Activated CD4-positive, alpha-beta T cell treated with anti-CD3 and anti-CD28 coated beads for 36 hours (primary cell): ENCODE measurements at regions of chr7 and their contacts with region 1.

Region 1: DNA sequence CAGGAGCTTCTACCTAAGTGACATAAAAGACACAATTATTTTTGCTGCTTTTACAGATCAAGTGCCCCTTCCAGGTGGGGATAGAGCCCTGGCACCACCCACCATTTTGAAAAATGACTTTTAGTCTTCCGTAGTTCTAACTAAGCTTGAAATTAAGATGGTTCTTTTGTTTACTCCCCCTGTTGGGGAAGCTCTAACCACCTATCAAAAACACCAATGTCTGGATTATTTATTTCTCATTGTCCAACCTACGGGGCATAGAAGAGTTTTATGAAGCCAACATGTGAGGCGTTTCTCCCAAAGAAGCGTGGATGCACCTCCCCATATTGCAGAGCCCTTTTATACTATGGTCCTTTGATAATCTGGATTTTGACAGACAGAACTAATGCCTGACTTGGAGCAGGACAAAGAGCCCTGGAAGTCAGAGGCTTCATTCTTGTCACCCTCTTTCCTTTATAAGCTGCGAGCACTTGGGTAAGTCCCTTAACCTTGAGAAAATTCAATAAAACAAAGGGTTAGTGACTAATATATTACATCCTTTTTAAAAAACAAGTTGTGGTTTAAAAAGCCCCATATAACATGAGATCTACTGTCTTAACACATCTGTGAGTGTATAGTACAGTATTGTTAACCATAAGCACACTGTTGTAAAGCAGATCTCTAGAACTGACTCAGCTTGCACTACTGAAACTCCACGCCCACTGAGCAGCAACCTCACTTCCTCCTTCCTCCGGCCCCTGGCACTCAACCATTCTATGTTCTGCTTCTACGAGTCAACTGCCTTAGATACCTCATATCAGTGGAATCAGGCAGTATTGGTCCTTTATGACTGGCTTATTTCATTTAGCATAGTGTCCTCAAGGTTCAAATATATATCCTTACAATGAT is 67.5 kb downstream of the ATXN7L1 start:
- DNase-seq: peak; percentile 94
- ATAC-seq: peak; percentile 82
- H3K4me3 Mint-ChIP-seq: peak overlapping the region; percentile 16
- H3K27ac Mint-ChIP-seq: peak overlapping the region; percentile 71
- H3K4me1 Mint-ChIP-seq: peaks cover 59% of the 10 kb centered on the region
- H3K27me3 Mint-ChIP-seq: peaks cover 8% of the 10 kb centered on the region

Region 2: GRCh38 chr7:104299323-104299722 is 1509.6 kb before region 1 on chr7:
- CTCF ChIA-PET with region 1: no interaction called
- POLR2A ChIA-PET with region 1: no interaction called
- intact Hi-C with region 1: loop called in 1 of 2 experiments (anchors 5 kb)
- DNase-seq: no peak
- ATAC-seq: no peak
- H3K4me3 Mint-ChIP-seq: no peak overlapping the region
- H3K27ac Mint-ChIP-seq: no peak overlapping the region
- H3K4me1 Mint-ChIP-seq: peaks cover 9% of the 10 kb centered on the region
- H3K27me3 Mint-ChIP-seq: peaks cover 23% of the 10 kb centered on the region

Region 3: DNA sequence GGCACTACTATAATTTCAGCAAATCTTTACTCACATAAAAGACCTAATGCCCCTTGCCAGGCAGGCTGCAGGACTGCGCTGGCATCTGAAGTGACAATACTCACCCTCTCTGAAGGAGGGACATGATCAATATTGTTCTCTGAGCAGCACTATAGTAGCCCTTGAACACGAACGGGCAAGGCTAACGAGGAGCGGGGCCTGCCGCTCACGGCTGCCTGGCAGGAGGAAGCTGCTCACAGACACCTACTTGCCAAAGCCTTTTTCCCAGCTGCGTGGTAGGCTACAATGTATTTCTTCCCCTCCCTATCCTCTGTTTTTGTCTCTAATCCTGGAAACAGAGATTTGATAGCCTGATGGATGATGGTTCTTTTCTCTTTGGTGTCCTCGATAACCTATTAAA is 306.8 kb before region 1 on chr7:
- CTCF ChIA-PET with region 1: no interaction called
- POLR2A ChIA-PET with region 1: no interaction called
- intact Hi-C with region 1: no loop called
- DNase-seq: no peak
- ATAC-seq: no peak
- H3K4me3 Mint-ChIP-seq: no peak overlapping the region
- H3K27ac Mint-ChIP-seq: no peak overlapping the region
- H3K4me1 Mint-ChIP-seq: no peaks in the 10 kb centered on the region
- H3K27me3 Mint-ChIP-seq: no peaks in the 10 kb centered on the region

Region 4: DNA sequence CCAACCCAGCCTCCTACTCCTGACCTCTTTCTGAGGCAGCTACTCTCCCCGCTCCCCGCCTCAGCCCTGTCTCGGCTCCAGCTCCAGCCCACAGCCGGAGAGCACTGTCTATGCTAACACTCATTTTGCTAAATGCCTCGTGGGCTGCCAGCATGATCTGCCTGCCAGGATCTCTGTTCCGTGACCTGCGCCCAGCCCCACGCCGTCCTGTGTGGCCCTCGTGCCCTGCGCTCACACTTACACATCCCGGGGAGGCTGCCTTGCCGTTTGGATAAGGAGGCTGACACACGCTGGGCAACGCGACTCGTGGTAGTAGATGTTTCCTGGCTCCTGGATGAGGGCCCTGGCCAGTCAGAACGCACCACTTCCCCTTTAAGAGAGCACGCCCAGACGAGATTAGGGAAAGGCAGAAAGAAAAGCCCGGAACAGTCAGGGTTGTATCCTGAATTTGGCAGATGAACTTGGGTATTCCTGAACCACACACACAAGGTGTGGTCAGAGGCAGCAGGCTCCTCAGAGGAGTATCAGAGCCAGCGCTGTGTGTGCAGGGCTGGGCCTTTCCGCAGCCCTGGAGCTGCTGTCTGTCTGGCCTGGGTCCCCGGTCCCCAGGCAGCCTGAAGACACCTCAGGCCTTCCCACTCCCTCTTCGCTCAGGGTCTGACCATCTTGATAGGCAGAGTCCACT is 130.0 kb before region 1 on chr7:
- CTCF ChIA-PET with region 1: no interaction called
- POLR2A ChIA-PET with region 1: no interaction called
- intact Hi-C with region 1: loop called (anchors 1 to 5 kb)
- DNase-seq: peak; percentile 62
- ATAC-seq: peak; percentile 21
- H3K4me3 Mint-ChIP-seq: peak overlapping the region; percentile 83
- H3K27ac Mint-ChIP-seq: peak overlapping the region; percentile 93
- H3K4me1 Mint-ChIP-seq: peaks cover 63% of the 10 kb centered on the region
- H3K27me3 Mint-ChIP-seq: no peaks in the 10 kb centered on the region

Region 5: GRCh38 chr7:105713488-105714465 is 95.2 kb before region 1 on chr7:
- CTCF ChIA-PET with region 1: no interaction called
- POLR2A ChIA-PET with region 1: no interaction called
- intact Hi-C with region 1: no loop called
- DNase-seq: peak; percentile 19
- ATAC-seq: no peak
- H3K4me3 Mint-ChIP-seq: no peak overlapping the region
- H3K27ac Mint-ChIP-seq: no peak overlapping the region
- H3K4me1 Mint-ChIP-seq: peaks cover 12% of the 10 kb centered on the region
- H3K27me3 Mint-ChIP-seq: no peaks in the 10 kb centered on the region

Region 6: DNA sequence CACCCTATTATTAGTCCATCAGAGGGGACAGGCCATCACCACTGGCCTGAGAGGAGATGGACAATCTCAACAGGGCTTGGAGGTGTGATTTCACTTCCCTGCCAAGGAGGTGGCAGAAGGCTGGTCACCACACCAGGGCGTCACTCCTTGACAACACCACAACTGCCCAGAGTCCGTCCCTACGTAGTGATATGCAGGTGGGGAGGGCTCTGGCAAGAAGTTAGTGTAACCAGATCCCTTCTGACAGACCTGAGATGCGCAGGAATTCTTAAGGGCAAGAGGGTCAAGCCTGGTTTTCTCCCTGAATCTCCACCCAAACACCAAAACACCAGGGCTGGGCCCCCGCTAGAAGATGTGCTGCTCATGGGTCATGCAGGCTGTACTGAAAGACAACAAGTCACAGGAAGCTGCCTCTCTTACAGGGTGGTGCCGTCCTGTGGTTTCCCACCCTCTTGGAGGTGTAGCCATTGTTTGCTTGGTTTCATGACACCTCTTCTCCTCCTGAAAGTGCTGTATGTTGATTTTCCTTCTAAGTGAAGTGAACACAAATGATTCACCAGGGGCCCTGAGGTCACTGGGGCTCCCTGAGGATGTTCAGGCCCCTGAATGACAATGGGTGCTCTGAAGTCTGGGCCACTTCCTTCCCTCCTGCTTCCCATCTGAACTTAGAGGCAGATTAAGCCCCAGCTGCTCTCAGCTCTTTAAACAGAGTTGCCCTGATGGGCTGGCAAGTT is 40.3 kb after region 1 on chr7:
- CTCF ChIA-PET with region 1: interaction called, 4 read pairs
- POLR2A ChIA-PET with region 1: interaction called, 3 read pairs
- intact Hi-C with region 1: loop called (anchors 1 kb)
- DNase-seq: peak; percentile 82
- ATAC-seq: peak; percentile 96
- H3K4me3 Mint-ChIP-seq: peak overlapping the region; percentile 32
- H3K27ac Mint-ChIP-seq: peak overlapping the region; percentile 59
- H3K4me1 Mint-ChIP-seq: peaks cover 52% of the 10 kb centered on the region
- H3K27me3 Mint-ChIP-seq: no peaks in the 10 kb centered on the region

Region 7: DNA sequence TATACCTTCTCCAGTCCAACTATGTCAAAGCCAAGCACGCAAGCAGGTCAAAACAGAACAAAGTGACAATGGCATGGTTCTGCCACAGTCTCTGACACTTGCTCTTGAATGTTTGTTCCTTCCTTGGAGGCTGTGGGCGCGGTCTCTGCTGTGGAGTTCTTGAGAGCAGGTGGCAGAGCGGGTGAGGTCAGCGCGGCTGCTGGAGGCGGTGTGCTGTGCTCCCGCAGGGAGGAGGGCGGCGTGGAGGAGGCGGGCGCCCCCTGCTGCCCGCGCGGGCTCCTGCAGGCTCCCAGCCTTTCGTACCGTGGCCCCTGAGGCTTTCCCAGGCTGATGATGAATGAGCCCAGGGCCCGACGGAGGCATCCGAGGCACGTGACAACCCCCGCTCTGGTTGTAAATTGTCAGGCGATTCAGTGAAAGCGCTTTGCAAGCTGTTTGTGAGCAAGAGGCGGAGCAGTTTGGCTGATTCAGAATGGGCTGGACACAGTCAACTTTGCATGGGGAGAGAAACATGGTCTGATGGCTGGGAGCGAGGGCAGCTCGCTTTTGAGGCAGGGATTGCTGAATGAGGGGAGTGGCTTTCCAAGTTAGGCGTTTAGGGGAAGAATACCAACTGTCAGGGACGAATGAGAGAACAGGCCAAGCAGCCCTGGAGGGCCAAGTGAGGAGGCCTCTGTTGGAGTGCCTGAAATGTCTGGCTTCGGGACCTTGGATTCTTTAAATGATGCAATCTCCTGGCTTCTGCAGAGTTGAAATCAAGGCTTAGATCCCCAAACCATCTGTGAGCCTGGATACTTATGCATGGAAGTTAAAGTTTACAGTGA is 200.7 kb after region 1 on chr7:
- CTCF ChIA-PET with region 1: no interaction called
- POLR2A ChIA-PET with region 1: no interaction called
- intact Hi-C with region 1: loop called in 1 of 2 experiments (anchors 1 kb)
- DNase-seq: peak; percentile 92
- ATAC-seq: peak; percentile 99
- H3K4me3 Mint-ChIP-seq: no peak overlapping the region
- H3K27ac Mint-ChIP-seq: peak overlapping the region; percentile 4
- H3K4me1 Mint-ChIP-seq: peaks cover 21% of the 10 kb centered on the region
- H3K27me3 Mint-ChIP-seq: peaks cover 2% of the 10 kb centered on the region

Region 8: DNA sequence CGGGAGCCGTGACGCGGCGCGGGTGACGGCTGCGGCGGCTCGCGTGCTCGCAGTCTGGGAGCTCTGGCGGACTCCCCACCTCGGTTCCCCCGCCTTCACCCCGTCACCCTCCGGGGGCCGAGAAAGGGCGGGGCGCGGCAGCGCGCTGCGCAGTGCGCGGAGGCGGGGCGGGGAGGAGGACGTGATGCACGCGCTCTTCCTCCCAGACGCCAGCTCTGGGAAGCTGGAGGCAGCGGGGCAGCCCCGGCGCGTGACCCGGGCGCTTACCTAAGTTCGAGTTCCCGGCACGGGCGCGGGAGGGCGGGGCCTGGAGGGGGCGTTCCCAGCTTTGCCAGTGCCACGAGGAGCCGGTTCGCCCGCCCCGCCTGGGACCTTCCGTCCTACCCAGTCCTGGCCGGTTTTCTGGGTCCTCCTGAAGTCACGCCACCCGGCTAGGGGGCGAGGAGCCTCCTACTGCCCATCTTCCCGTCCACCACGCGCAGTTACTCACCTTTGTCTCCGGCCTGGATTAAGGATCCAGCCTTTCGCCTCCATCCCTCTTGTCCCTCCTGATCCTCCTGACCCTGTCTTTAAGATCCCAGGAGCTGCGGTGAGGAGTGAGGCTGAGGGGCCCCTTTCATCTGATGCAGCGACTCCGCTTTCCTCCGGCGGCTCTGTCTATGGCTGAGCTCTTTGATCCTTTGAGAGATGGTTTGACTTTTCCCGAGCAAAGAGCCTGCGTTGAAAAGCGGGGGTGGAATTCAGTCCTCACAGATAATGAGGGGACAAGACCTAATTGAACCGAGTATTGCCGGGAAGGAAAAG is 476.3 kb after region 1 on chr7:
- CTCF ChIA-PET with region 1: no interaction called
- POLR2A ChIA-PET with region 1: no interaction called
- intact Hi-C with region 1: loop called in 1 of 2 experiments (anchors 5 kb)
- DNase-seq: peak; percentile 100
- ATAC-seq: peak; percentile 80
- H3K4me3 Mint-ChIP-seq: peak overlapping the region; percentile 94
- H3K27ac Mint-ChIP-seq: peak overlapping the region; percentile 99
- H3K4me1 Mint-ChIP-seq: peaks cover 45% of the 10 kb centered on the region
- H3K27me3 Mint-ChIP-seq: no peaks in the 10 kb centered on the region

Region 9: GRCh38 chr7:107168233-107169119 is 1359.5 kb after region 1 on chr7 and contains the start of gene HBP1:
- CTCF ChIA-PET with region 1: no interaction called
- POLR2A ChIA-PET with region 1: no interaction called
- intact Hi-C with region 1: loop called in 1 of 2 experiments (anchors 2 kb)
- DNase-seq: peak; percentile 98
- ATAC-seq: peak; percentile 82
- H3K4me3 Mint-ChIP-seq: peak within 1 kb of the TSS; percentile 91
- H3K27ac Mint-ChIP-seq: peak within 1 kb of the TSS; percentile 100
- H3K4me1 Mint-ChIP-seq: peaks cover 32% of the 10 kb centered on the region
- H3K27me3 Mint-ChIP-seq: no peaks in the 10 kb centered on the region
- total RNA-seq, gene HBP1: 17.8 to 25.4 TPM